ENCODE measurements at regions of chr9 and their contacts with region 1.

Region 1: GRCh38 chr9:72364679-72365524 is at the start of gene ZFAND5:
- DNase-seq: peak; percentile 99 to 100 (median 99)
- ATAC-seq: peak; percentile 94 to 97 (median 95)
- H3K4me3 ChIP-seq: peak within 1 kb of the TSS; percentile 86 to 96 (median 92)
- H3K27ac ChIP-seq: peak within 1 kb of the TSS; percentile 99 to 100 (median 100)
- H3K4me1 ChIP-seq: peaks cover 4 to 44% (median 23%) of the 10 kb centered on the region in 12 donors
- H3K27me3 ChIP-seq: no peaks in the 10 kb centered on the region
- CTCF ChIP-seq: peak in 2 of 12 donors; percentile 2 to 24
- POLR2A ChIP-seq: peak; percentile 95 to 100
- total RNA-seq, gene ZFAND5: 125 to 275 (median 205) TPM

Region 2: DNA sequence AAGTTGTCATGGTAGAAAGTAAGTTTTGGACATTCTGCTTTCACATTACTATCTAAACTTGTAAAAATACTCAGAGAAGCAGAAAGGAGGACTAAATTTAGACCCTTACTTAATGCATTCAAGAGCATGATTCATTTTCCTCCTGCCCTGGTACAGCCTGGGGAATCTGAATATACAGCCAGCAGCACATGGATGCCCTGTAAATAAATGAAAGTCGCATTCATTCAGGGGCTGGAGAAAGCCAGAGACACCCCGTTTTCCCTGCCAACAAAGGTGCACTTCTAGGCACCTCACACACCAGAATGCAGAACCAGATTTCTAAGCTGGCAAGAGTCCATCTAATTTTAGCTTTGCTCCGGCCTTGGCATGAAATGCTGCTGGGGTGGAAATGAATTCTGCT is 1777.7 kb before region 1 on chr9:
- intact Hi-C with region 1: loop called in 1 of 10 experiments (anchors 10 kb)
- DNase-seq: peak in 2 of 5 donors; percentile 44 to 47
- ATAC-seq: peak; percentile 69 to 83 (median 78)
- H3K4me3 ChIP-seq: no peak overlapping the region
- H3K27ac ChIP-seq: peak overlapping the region; percentile 59 to 92 (median 83)
- H3K4me1 ChIP-seq: peaks cover 9 to 63% (median 43%) of the 10 kb centered on the region in 12 donors
- H3K27me3 ChIP-seq: no peaks in the 10 kb centered on the region
- CTCF ChIP-seq: no peak
- POLR2A ChIP-seq: no peak

Region 3: DNA sequence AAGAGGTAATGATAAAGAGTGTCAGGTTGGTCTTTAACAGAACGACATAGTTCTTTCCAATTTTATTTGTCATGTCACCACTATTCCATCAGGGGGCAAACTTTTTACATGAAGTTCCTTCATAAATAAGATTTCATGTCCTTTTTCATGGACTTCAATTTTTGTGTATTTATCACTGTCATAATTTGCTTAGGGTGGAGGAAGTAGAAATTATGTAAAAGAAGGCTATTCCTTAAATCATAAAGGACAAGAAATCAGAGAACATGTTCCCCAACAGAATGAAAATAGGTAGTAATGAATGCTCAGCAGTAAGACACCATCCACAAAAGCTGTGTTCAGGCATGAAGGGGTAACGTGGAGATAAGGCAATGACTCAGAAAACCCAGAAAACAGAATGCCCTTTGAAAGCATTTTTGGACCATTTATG is 72.6 kb before region 1 on chr9:
- intact Hi-C with region 1: loop called in 4 of 10 experiments (anchors 2 to 10 kb)
- DNase-seq: no peak
- ATAC-seq: peak in 1 of 4 donors; percentile 65
- H3K4me3 ChIP-seq: no peak overlapping the region
- H3K27ac ChIP-seq: peak overlapping the region in 1 of 12 donors; percentile 74
- H3K4me1 ChIP-seq: peaks cover 0 to 28% (median 3%) of the 10 kb centered on the region in 12 donors
- H3K27me3 ChIP-seq: no peaks in the 10 kb centered on the region
- CTCF ChIP-seq: peak; percentile 39 to 80 (median 66)
- POLR2A ChIP-seq: no peak

Region 4: DNA sequence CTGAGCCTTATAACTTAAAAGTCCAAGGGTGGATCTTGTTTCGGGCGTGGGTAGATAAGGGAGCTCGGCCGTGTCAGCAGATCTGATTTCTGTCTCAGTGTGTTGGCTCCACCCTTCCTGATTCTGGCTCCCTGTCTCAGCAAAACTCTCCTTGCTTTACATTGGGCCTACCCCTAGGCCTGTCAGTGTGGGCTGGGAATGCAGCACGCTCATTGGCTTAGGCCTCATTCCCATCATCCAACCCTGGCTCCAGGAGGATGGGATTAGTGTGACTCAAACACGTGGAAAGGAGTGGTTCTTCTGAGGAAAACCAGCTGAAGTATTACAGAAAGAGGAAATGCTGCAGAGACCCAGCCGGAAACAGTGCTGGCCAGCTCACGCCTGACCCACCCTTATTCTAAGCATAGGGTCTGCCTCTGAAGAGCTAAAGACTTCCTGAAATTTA is 59.8 kb before region 1 on chr9:
- intact Hi-C with region 1: loop called in 2 of 10 experiments (anchors 2 to 5 kb)
- DNase-seq: peak; percentile 79 to 89 (median 85)
- ATAC-seq: peak; percentile 98 to 100 (median 99)
- H3K4me3 ChIP-seq: peak overlapping the region in 9 of 12 donors; percentile 22 to 70 (median 42)
- H3K27ac ChIP-seq: peak overlapping the region; percentile 9 to 91 (median 80)
- H3K4me1 ChIP-seq: peaks cover 0 to 33% (median 1%) of the 10 kb centered on the region in 12 donors
- H3K27me3 ChIP-seq: no peaks in the 10 kb centered on the region
- CTCF ChIP-seq: no peak
- POLR2A ChIP-seq: peak in 1 of 2 donors; percentile 65

Region 5: GRCh38 chr9:72526901-72527800 is 162.2 kb after region 1 on chr9:
- intact Hi-C with region 1: loop called in 1 of 10 experiments (anchors 1 kb)
- DNase-seq: peak; percentile 44 to 77 (median 69)
- ATAC-seq: peak; percentile 90 to 95 (median 92)
- H3K4me3 ChIP-seq: peak overlapping the region in 10 of 12 donors; percentile 4 to 44 (median 32)
- H3K27ac ChIP-seq: peak overlapping the region in 7 of 12 donors; percentile 1 to 66 (median 49)
- H3K4me1 ChIP-seq: peaks cover 0 to 27% (median 15%) of the 10 kb centered on the region in 12 donors
- H3K27me3 ChIP-seq: no peaks in the 10 kb centered on the region
- CTCF ChIP-seq: no peak
- POLR2A ChIP-seq: no peak

Region 6: DNA sequence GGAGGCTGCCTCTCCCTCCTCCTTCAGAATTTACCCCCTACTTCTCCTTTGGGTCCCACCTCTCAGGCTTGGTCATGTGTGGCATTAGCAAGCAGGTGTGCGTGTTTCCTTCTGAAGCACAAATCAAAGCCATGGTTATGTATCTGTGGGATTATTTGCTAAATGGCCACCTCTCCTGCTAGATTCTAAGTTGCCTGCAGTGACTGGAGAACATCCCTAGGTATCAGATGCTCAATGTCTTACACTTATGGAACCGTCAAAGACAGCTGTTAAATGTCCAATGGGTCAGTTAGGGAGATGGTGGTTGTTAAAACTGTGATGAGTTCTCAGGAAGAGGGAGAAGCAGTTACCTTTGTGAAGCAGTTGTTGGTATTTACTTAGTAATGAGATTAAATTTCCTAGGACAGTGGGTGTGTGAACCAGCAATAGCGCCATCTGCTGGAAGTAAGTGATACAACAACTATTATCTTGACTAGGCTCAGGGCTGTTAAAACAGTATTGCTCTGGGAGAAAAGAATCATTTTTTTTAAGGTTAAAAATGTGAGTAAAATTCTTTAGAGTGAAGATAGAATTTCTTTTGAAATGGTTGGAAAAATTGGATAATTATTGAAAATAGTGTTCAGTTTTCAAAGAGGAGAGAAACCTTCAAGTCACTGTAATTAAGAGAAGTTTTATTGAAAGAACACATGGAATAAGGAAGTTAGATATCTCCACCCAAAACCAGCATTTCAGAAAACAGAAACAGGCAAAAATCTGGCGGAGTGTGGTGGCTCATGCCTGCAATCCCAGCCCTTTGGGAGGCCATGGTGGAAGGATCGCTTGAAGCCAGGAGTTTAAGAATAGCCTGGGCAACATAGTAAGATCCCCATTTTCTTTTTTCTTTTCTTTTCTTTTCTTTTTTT is 227.9 kb after region 1 on chr9:
- intact Hi-C with region 1: loop called in 5 of 10 experiments (anchors 5 to 10 kb)
- DNase-seq: peak in 1 of 5 donors; percentile 24
- ATAC-seq: peak; percentile 55 to 80 (median 78)
- H3K4me3 ChIP-seq: no peak overlapping the region
- H3K27ac ChIP-seq: peak overlapping the region in 1 of 12 donors; percentile 67
- H3K4me1 ChIP-seq: peaks cover 0 to 42% (median 3%) of the 10 kb centered on the region in 12 donors
- H3K27me3 ChIP-seq: no peaks in the 10 kb centered on the region
- CTCF ChIP-seq: peak; percentile 77 to 92 (median 85)
- POLR2A ChIP-seq: no peak

Region 7: DNA sequence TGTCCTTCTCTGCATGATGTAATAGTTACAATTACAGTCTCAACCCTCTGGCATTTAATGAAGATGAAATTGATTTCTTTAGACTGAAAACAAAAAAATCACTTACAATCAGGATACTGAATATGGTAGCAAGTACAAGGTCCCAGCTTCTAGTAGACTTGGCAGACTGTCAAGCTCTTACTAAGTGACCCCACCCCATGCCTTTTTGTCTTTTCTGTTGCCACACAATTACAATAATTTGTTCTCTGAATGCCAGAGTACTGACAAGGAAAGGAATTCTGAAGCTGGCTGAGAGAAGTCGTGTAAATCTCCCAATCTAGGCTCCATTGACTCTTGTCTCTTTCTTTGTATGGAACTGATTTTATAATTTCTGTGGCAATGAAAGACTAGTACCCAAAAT is 310.7 kb after region 1 on chr9:
- intact Hi-C with region 1: no loop called
- DNase-seq: no peak
- ATAC-seq: no peak
- H3K4me3 ChIP-seq: no peak overlapping the region
- H3K27ac ChIP-seq: no peak overlapping the region
- H3K4me1 ChIP-seq: no peaks in the 10 kb centered on the region
- H3K27me3 ChIP-seq: no peaks in the 10 kb centered on the region
- CTCF ChIP-seq: no peak
- POLR2A ChIP-seq: no peak

Measured in heart left ventricle (tissue), 16 donors.